CD8-positive, alpha-beta memory T cell (primary cell): ENCODE measurements at regions of chr1 and their contacts with region 1.

Region 1: GRCh38 chr1:31984419-31985347 is 29.0 kb upstream of the KHDRBS1 start:
- DNase-seq: peak in 3 of 5 donors; percentile 7 to 59 (median 22)
- H3K4me3 ChIP-seq: peak overlapping the region; percentile 9
- H3K4me3 Mint-ChIP-seq: peak overlapping the region in 6 of 7 donors; percentile 40 to 80 (median 58)
- H3K27ac ChIP-seq: no peak overlapping the region
- H3K27ac Mint-ChIP-seq: peak overlapping the region; percentile 90 to 97 (median 94)
- H3K4me1 ChIP-seq: peaks cover 58% of the 10 kb centered on the region
- H3K4me1 Mint-ChIP-seq: peaks cover 55 to 65% (median 63%) of the 10 kb centered on the region in 3 donors
- H3K27me3 ChIP-seq: no peaks in the 10 kb centered on the region
- H3K27me3 Mint-ChIP-seq: no peaks in the 10 kb centered on the region

Region 2: GRCh38 chr1:31822766-31823165 is 161.9 kb before region 1 on chr1:
- CTCF ChIA-PET with region 1: no interaction called
- POLR2A ChIA-PET with region 1: no interaction called
- DNase-seq: no peak
- H3K4me3 ChIP-seq: no peak overlapping the region
- H3K4me3 Mint-ChIP-seq: peak overlapping the region in 1 of 7 donors; percentile 36
- H3K27ac ChIP-seq: no peak overlapping the region
- H3K27ac Mint-ChIP-seq: peak overlapping the region in 1 of 8 donors; percentile 24
- H3K4me1 ChIP-seq: peaks cover 21% of the 10 kb centered on the region
- H3K4me1 Mint-ChIP-seq: peaks cover 17 to 19% (median 19%) of the 10 kb centered on the region in 3 donors
- H3K27me3 ChIP-seq: no peaks in the 10 kb centered on the region
- H3K27me3 Mint-ChIP-seq: no peaks in the 10 kb centered on the region

Region 3: GRCh38 chr1:32005522-32005921 is 20.8 kb after region 1 on chr1:
- CTCF ChIA-PET with region 1: interaction called, 4 read pairs
- POLR2A ChIA-PET with region 1: interaction called, 15 read pairs
- DNase-seq: no peak
- H3K4me3 ChIP-seq: no peak overlapping the region
- H3K4me3 Mint-ChIP-seq: no peak overlapping the region
- H3K27ac ChIP-seq: no peak overlapping the region
- H3K27ac Mint-ChIP-seq: no peak overlapping the region
- H3K4me1 ChIP-seq: no peaks in the 10 kb centered on the region
- H3K4me1 Mint-ChIP-seq: peaks cover 3 to 5% (median 4%) of the 10 kb centered on the region in 3 donors
- H3K27me3 ChIP-seq: no peaks in the 10 kb centered on the region
- H3K27me3 Mint-ChIP-seq: no peaks in the 10 kb centered on the region